ENCODE measurements at regions of chr14 and their contacts with region 1.

Region 1: GRCh38 chr14:77023001-77023996 is 5.2 kb downstream of the IRF2BPL start:
- DNase-seq: peak; percentile 87 to 89
- H3K4me3 ChIP-seq: 0 out of 2 replicates have a peak overlapping the region, but pooled peaks have one; percentile 3
- H3K4me3 Mint-ChIP-seq: peak overlapping the region; percentile 50
- H3K27ac Mint-ChIP-seq: peak overlapping the region; percentile 63
- H3K4me1 ChIP-seq: peaks cover 39% of the 10 kb centered on the region
- H3K4me1 Mint-ChIP-seq: peaks cover 28% of the 10 kb centered on the region
- H3K27me3 ChIP-seq: no peaks in the 10 kb centered on the region
- H3K27me3 Mint-ChIP-seq: no peaks in the 10 kb centered on the region
- CTCF ChIP-seq: peak; percentile 22 to 52

Region 2: DNA sequence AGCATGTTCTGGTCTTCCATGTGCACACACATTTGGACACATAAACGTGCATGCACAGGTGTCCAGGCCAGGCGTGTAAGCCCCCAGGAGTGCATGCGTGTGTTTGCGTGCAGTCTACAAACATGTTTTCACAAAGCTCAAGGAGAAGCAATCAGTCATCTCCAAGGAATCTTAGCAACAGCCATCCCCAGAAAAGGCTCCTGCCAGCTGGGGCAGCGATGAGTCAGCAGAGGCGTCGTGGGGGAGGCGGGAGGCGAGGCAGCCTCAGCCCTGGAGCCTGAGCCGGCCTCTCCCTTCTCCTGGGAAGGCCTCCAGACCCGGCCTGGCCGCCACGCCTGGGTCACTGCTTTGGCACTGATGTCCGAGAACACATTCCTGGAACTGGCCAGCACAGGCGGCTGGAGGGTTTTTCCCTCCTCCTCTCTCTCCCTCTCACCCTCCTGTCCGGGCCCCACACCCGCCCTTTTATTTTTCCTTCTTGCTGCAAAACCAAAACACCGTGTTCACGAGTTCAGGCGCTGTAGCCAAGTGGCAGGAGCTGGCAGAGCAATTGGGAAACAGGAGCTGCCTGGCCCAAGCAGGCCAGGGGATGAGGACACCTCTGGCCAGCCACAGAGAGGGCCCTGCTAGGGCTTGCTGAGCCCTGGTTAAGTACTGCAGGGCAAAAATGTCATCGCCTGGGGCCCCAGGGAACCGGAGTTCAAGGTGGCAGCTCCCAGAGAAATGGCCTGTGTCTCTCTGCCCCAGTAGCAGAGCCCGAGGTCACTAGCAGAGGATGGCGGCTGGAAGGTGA is 104.4 kb before region 1 on chr14:
- CTCF ChIA-PET with region 1: interaction called, 3 read pairs
- POLR2A ChIA-PET with region 1: interaction called, 14 read pairs
- intact Hi-C with region 1: no loop called
- DNase-seq: peak; percentile 70 to 75
- H3K4me3 ChIP-seq: no peak overlapping the region
- H3K4me3 Mint-ChIP-seq: no peak overlapping the region
- H3K27ac Mint-ChIP-seq: peak overlapping the region; percentile 82
- H3K4me1 ChIP-seq: peaks cover 25% of the 10 kb centered on the region
- H3K4me1 Mint-ChIP-seq: peaks cover 20% of the 10 kb centered on the region
- H3K27me3 ChIP-seq: no peaks in the 10 kb centered on the region
- H3K27me3 Mint-ChIP-seq: no peaks in the 10 kb centered on the region
- CTCF ChIP-seq: peak in 1 of 2 experiments; percentile 39

Region 3: DNA sequence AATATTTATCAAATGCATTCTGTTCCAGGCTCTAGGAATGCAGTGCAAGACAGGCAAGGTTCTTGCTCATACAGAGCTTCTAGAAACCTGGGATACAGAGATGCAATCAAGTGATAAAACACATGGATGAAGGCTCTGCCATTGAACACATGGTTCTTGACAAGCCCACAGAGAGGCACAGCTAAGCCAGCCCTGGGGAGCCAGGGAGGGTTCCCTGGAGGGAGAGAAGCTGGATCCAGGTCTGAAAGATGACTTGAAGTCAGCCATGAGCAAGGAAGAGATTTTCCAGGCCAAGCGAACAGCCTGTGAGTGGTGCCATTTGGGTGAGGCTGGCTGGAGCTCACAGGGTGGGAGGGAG is 61.0 kb before region 1 on chr14:
- CTCF ChIA-PET with region 1: interaction called, 5 read pairs
- POLR2A ChIA-PET with region 1: interaction called, 7 read pairs
- intact Hi-C with region 1: loop called (anchors 2 kb)
- DNase-seq: no peak
- H3K4me3 ChIP-seq: peak overlapping the region; percentile 24
- H3K4me3 Mint-ChIP-seq: peak overlapping the region; percentile 88
- H3K27ac Mint-ChIP-seq: peak overlapping the region; percentile 84
- H3K4me1 ChIP-seq: peaks cover 25% of the 10 kb centered on the region
- H3K4me1 Mint-ChIP-seq: peaks cover 20% of the 10 kb centered on the region
- H3K27me3 ChIP-seq: no peaks in the 10 kb centered on the region
- H3K27me3 Mint-ChIP-seq: no peaks in the 10 kb centered on the region
- CTCF ChIP-seq: no peak

Region 4: GRCh38 chr14:76968621-76969063 is 54.7 kb before region 1 on chr14:
- CTCF ChIA-PET with region 1: interaction called, 4 read pairs
- POLR2A ChIA-PET with region 1: no interaction called
- intact Hi-C with region 1: loop called (anchors 2 kb)
- DNase-seq: peak; percentile 63 to 65
- H3K4me3 ChIP-seq: no peak overlapping the region
- H3K4me3 Mint-ChIP-seq: no peak overlapping the region
- H3K27ac Mint-ChIP-seq: peak overlapping the region; percentile 46
- H3K4me1 ChIP-seq: peaks cover 19% of the 10 kb centered on the region
- H3K4me1 Mint-ChIP-seq: peaks cover 25% of the 10 kb centered on the region
- H3K27me3 ChIP-seq: no peaks in the 10 kb centered on the region
- H3K27me3 Mint-ChIP-seq: no peaks in the 10 kb centered on the region
- CTCF ChIP-seq: peak in 1 of 2 experiments; percentile 28

Region 5: GRCh38 chr14:77007975-77008421 is 15.3 kb before region 1 on chr14:
- CTCF ChIA-PET with region 1: no interaction called
- POLR2A ChIA-PET with region 1: interaction called, 4 read pairs
- intact Hi-C with region 1: loop called (anchors 1 kb)
- DNase-seq: peak; percentile 75 to 82
- H3K4me3 ChIP-seq: no peak overlapping the region
- H3K4me3 Mint-ChIP-seq: peak overlapping the region; percentile 44
- H3K27ac Mint-ChIP-seq: peak overlapping the region; percentile 86
- H3K4me1 ChIP-seq: peaks cover 61% of the 10 kb centered on the region
- H3K4me1 Mint-ChIP-seq: peaks cover 72% of the 10 kb centered on the region
- H3K27me3 ChIP-seq: no peaks in the 10 kb centered on the region
- H3K27me3 Mint-ChIP-seq: no peaks in the 10 kb centered on the region
- CTCF ChIP-seq: no peak

Region 6: DNA sequence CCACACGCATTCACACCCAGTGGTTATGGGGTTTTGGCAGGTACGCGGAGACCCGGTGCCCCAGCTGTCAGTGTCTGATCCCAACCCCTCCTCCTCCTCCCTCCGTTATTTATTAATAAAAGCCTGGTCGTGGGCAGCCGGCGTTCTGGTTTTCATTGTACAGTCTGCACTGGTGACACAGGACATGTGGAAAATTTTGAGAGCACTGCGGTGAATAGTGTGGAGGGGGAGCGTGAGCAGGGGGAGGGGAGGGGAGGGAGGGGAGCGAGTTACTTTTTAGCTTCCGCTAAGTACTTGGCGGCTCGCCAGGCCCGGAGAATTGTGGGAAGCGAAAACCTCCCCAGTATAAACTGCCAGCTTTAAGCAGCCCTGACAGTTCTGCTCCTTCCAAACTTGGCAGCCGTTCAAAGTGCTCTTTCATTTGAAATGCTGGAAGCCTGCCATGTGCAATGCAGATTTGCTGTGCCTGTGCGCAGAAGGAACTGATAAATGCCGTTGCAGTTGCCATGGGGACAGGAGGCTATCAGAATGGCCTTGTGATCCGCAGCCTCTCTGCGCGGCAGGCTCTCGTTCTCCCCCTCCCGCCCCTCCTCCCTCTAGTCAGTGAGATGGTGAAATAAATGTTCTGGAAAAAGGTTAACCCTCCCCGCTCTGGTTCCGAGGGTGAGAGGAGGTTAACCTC is 16.9 kb after region 1 on chr14:
- CTCF ChIA-PET with region 1: interaction called, 4 read pairs
- POLR2A ChIA-PET with region 1: interaction called, 8 read pairs
- intact Hi-C with region 1: loop called (anchors 1 kb)
- DNase-seq: peak; percentile 75 to 81
- H3K4me3 ChIP-seq: peak overlapping the region; percentile 39
- H3K4me3 Mint-ChIP-seq: peak overlapping the region; percentile 80
- H3K27ac Mint-ChIP-seq: peak overlapping the region; percentile 83
- H3K4me1 ChIP-seq: peaks cover 35% of the 10 kb centered on the region
- H3K4me1 Mint-ChIP-seq: peaks cover 47% of the 10 kb centered on the region
- H3K27me3 ChIP-seq: no peaks in the 10 kb centered on the region
- H3K27me3 Mint-ChIP-seq: no peaks in the 10 kb centered on the region
- CTCF ChIP-seq: no peak

Region 7: DNA sequence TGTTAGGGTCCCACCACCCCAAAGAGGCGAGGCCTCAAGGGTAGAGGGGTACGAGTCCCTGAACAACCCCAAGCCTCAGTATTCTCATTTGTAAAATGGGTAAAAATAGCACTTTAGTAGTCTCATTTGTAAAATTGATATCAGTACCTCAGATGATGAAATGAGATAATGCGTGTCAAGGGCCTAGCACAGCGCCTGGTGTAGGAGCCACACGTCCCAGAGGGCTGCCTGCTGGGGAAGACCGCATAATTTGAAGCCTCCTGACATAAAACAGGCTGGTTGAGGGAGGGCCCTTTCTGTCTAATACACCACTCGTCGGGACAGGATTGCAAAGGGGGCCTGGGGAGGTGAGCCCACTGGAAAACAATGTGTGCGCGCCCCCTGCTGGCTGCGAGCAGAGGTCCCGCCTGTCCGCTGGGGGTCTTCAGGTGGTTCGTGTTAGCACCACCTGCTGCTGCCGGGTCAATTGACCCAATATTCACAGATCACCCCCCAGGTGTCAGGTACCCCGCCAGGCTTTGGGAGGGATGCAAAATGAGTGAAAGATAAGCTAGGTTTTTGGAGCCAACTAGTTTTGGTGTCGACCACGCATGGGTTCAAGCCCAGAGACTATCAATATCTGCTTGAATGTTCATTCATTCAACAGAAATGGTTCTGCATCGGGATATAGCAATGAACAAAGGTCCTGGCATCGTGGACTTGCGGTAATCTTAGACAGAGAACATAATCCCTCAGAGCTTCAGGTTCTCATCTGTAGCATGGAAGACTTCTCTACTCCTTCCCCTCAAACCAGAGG is 29.9 kb after region 1 on chr14:
- CTCF ChIA-PET with region 1: no interaction called
- POLR2A ChIA-PET with region 1: no interaction called
- intact Hi-C with region 1: no loop called
- DNase-seq: peak; percentile 79 to 84
- H3K4me3 ChIP-seq: no peak overlapping the region
- H3K4me3 Mint-ChIP-seq: no peak overlapping the region
- H3K27ac Mint-ChIP-seq: no peak overlapping the region
- H3K4me1 ChIP-seq: peaks cover 6% of the 10 kb centered on the region; the same call in 1 of the 2 replicates
- H3K4me1 Mint-ChIP-seq: no peaks in the 10 kb centered on the region
- H3K27me3 ChIP-seq: no peaks in the 10 kb centered on the region
- H3K27me3 Mint-ChIP-seq: no peaks in the 10 kb centered on the region
- CTCF ChIP-seq: peak; percentile 93 to 94

Region 8: DNA sequence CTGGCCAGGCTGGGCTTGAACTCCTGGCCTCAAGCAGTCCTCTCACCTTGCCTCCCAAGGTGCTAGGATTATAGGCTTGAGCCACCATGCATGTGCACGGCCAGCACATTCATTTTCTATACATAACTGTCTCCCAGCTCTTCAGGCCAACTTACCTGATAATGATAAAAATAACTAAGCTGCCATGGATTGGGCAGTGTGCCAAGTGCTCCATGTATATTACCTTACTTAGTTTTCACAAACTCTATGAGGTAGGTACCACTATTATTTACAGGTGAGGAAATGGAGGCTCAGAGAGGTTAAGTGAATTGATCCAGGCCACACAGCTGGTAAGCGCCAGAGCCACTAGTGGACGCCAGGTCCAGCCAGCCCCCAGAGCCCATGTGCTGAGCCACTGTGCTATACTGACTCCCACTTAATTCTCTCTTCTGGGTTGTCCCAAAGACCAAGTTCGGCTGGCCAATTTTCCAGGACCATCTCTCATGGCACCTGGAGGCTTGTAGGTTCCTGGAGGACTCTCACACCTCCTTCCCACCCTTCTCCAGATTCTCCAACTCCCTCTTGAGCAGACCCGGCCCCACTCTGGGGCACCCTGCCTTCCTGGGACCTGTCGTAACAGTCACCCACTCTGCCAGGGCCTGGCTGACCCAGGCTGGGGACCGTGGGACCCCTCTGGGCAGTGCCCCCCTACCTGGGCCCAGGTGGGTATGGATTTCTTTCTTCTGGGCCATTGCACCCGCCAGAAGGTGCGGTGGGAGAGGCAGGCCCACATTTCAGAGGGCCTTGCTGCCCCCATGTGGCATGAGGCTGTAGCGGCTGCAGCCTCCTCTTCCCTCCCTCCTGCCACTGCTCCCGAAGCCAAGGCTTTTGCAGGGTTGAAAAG is 44.6 kb after region 1 on chr14:
- CTCF ChIA-PET with region 1: no interaction called
- POLR2A ChIA-PET with region 1: no interaction called
- intact Hi-C with region 1: loop called (anchors 2 kb)
- DNase-seq: peak; percentile 65 to 82
- H3K4me3 ChIP-seq: no peak overlapping the region
- H3K4me3 Mint-ChIP-seq: no peak overlapping the region
- H3K27ac Mint-ChIP-seq: no peak overlapping the region
- H3K4me1 ChIP-seq: no peaks in the 10 kb centered on the region
- H3K4me1 Mint-ChIP-seq: no peaks in the 10 kb centered on the region
- H3K27me3 ChIP-seq: no peaks in the 10 kb centered on the region
- H3K27me3 Mint-ChIP-seq: no peaks in the 10 kb centered on the region
- CTCF ChIP-seq: peak; percentile 87 to 94